OCI-LY7 (cell line): ENCODE measurements at regions of chr15 and their contacts with region 1.

Region 1: GRCh38 chr15:41811432-41812195 is 16.3 kb upstream of the JMJD7 start:
- DNase-seq: peak; percentile 82
- H3K4me3 ChIP-seq: no peak overlapping the region
- H3K27ac ChIP-seq: no peak overlapping the region
- H3K4me1 ChIP-seq: peaks cover 16% of the 10 kb centered on the region
- CTCF ChIP-seq: peak; percentile 97

Region 2: GRCh38 chr15:41557673-41558399 is 253.8 kb before region 1 on chr15:
- CTCF ChIA-PET with region 1: interaction called, 3 read pairs
- POLR2A ChIA-PET with region 1: no interaction called
- intact Hi-C with region 1: loop called (anchors 1 kb)
- DNase-seq: peak; percentile 77
- H3K4me3 ChIP-seq: peak overlapping the region; percentile 50
- H3K27ac ChIP-seq: no peak overlapping the region
- H3K4me1 ChIP-seq: peaks cover 30% of the 10 kb centered on the region
- CTCF ChIP-seq: peak; percentile 99

Region 3: DNA sequence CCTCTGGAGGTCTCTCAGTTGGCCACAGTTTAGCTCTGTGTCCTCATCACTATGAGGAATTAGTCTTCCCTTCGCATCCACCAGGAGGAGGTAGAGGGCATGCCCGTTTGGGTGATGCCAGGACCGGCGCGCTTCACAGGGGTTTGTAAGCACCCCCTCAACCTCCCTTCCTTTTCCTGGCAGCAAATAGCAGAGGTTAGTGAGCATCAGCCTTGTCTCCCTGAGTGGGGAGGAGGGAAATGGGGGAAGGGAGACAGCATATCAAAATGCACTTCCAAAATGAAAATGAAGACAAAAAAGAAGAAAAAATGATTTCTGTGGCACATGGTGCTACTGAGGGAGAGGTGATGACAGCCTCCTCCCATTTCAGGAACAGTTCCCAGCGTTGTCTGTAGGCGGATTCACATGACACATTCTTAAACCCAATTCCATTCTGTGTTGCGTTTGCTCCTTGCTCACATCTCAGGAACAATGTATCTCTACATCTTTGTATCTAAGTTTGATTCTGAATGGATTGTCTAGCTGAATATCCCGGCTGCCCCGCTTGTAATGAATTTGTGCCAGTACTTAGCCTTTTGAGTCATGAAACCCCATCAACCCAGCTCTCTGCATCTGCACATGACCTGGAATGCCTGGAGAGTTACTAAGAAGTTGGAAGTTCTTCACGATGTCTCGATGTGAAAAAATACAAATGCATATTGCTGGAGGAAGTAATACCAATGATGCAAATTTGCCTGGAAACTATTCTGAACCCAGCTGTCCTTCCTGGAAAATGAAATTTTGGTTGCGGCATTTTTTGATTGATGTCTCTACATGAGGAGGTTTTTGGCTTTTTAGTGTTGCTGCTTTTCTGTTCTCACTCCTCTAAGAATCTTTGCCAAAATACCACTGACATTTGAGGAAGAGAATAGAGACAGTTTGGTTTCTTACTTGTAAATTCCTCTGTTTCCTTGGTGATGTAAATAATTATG is 207.4 kb before region 1 on chr15:
- CTCF ChIA-PET with region 1: interaction called, 3 read pairs
- POLR2A ChIA-PET with region 1: interaction called, 3 read pairs
- intact Hi-C with region 1: loop called (anchors 5 kb)
- DNase-seq: peak; percentile 64
- H3K4me3 ChIP-seq: no peak overlapping the region
- H3K27ac ChIP-seq: no peak overlapping the region
- H3K4me1 ChIP-seq: peaks cover 8% of the 10 kb centered on the region
- CTCF ChIP-seq: peak; percentile 79

Region 4: DNA sequence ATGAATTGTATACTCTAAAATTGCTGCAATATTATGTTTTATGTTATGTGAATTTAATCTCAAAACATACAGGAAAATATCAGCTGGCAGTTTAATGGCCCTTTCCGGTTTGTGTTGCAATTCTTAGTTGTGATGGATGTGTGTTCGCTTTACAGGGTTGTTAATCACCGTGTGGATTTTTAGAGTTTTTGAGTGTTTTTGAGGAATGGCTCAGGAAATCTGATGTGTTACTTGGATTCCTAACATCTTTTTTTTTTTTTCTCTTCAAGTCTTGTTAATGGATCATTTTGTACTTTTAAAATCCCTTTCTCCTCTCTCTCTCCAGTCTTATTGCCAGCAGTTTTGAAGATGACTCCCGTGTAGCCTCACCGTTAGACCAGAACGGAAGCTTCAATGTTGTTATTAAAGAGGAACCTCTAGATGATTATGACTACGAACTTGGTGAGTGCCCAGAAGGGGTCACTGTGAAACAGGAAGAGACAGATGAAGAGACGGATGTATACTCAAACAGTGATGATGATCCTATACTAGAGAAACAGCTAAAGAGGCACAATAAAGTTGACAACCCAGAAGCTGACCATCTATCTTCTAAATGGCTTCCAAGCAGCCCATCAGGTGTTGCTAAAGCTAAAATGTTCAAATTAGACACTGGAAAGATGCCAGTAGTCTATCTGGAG is 115.7 kb before region 1 on chr15:
- CTCF ChIA-PET with region 1: no interaction called
- POLR2A ChIA-PET with region 1: no interaction called
- intact Hi-C with region 1: loop called (anchors 1 kb)
- DNase-seq: peak; percentile 81
- H3K4me3 ChIP-seq: peak overlapping the region; percentile 3
- H3K27ac ChIP-seq: peak overlapping the region; percentile 27
- H3K4me1 ChIP-seq: peaks cover 31% of the 10 kb centered on the region
- CTCF ChIP-seq: peak; percentile 84

Region 5: GRCh38 chr15:41904541-41905005 is 93.0 kb after region 1 on chr15:
- CTCF ChIA-PET with region 1: no interaction called
- POLR2A ChIA-PET with region 1: no interaction called
- intact Hi-C with region 1: loop called (anchors 5 kb)
- DNase-seq: peak; percentile 69
- H3K4me3 ChIP-seq: no peak overlapping the region
- H3K27ac ChIP-seq: no peak overlapping the region
- H3K4me1 ChIP-seq: no peaks in the 10 kb centered on the region
- CTCF ChIP-seq: peak; percentile 90